Gastrocnemius medialis (tissue), 4 donors: ENCODE measurements at regions of chr1 and their contacts with region 1.

Region 1: GRCh38 chr1:168637350-168637991 is 61.1 kb downstream of the XCL1 start:
- DNase-seq: peak in 1 of 2 donors; percentile 30
- ATAC-seq: peak; percentile 60 to 79
- H3K4me3 ChIP-seq: peak overlapping the region in 1 of 4 donors; percentile 9
- H3K27ac ChIP-seq: peak overlapping the region; percentile 88 to 100 (median 94)
- H3K4me1 ChIP-seq: peaks cover 23 to 47% of the 10 kb centered on the region in 2 donors
- H3K27me3 ChIP-seq: no peaks in the 10 kb centered on the region
- CTCF ChIP-seq: peak; percentile 61 to 84 (median 77)
- POLR2A ChIP-seq: peak in 1 of 2 donors; percentile 12

Region 2: GRCh38 chr1:168483539-168483938 is 153.9 kb before region 1 on chr1:
- in situ Hi-C with region 1: no loop called
- intact Hi-C with region 1: no loop called
- DNase-seq: no peak
- ATAC-seq: peak; percentile 38 to 43
- H3K4me3 ChIP-seq: no peak overlapping the region
- H3K27ac ChIP-seq: peak overlapping the region in 1 of 4 donors; percentile 39
- H3K4me1 ChIP-seq: peaks cover 0 to 3% of the 10 kb centered on the region in 2 donors
- H3K27me3 ChIP-seq: no peaks in the 10 kb centered on the region
- CTCF ChIP-seq: no peak
- POLR2A ChIP-seq: no peak

Region 3: GRCh38 chr1:168623003-168623828 is 14.3 kb before region 1 on chr1:
- in situ Hi-C with region 1: no loop called
- intact Hi-C with region 1: loop called (anchors 1 kb)
- DNase-seq: peak; percentile 88 to 92
- ATAC-seq: peak; percentile 88 to 93
- H3K4me3 ChIP-seq: peak overlapping the region in 3 of 4 donors; percentile 15 to 31 (median 24)
- H3K27ac ChIP-seq: peak overlapping the region; percentile 85 to 100 (median 90)
- H3K4me1 ChIP-seq: peaks cover 29 to 37% of the 10 kb centered on the region in 2 donors
- H3K27me3 ChIP-seq: no peaks in the 10 kb centered on the region
- CTCF ChIP-seq: peak in 2 of 5 experiments; percentile 22 to 25
- POLR2A ChIP-seq: peak in 1 of 2 donors; percentile 81

Region 4: DNA sequence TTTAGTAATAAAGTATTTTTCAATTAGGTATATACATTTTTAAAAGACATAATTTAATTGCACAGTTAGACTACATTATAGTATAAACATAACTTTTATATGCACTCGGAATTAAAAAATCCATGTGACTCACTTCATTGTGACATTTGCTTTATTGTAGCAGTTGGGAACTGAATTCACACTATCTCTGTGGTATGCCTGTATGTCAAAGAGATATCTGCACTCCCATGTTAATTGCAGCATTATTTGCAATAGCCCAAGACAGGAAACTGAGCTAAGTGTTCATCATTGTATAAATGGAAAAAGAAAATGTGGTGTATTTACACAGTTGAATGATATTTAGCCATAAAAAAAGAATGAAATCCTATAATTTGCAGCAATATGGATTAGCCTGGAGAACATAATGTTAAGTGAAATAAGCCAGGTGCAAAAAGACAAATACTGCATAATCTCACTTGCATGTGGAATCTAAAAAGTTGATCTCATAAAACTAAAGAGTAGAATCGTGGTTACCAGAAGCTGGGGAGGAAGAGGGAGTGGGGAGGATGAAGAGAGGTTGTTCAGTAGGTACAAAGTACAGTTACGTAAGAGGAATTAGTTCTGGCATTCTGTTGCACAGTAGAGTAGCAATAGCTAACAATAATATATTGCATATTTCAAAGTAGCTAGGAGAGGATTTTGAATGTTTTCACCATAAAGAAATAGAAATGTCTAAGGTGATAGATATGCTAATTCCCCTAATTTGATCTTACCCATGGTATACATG is 26.8 kb after region 1 on chr1:
- in situ Hi-C with region 1: no loop called
- intact Hi-C with region 1: no loop called
- DNase-seq: no peak
- ATAC-seq: no peak
- H3K4me3 ChIP-seq: no peak overlapping the region
- H3K27ac ChIP-seq: no peak overlapping the region
- H3K4me1 ChIP-seq: peaks cover 0 to 10% of the 10 kb centered on the region in 2 donors
- H3K27me3 ChIP-seq: no peaks in the 10 kb centered on the region
- CTCF ChIP-seq: no peak
- POLR2A ChIP-seq: no peak

Region 5: DNA sequence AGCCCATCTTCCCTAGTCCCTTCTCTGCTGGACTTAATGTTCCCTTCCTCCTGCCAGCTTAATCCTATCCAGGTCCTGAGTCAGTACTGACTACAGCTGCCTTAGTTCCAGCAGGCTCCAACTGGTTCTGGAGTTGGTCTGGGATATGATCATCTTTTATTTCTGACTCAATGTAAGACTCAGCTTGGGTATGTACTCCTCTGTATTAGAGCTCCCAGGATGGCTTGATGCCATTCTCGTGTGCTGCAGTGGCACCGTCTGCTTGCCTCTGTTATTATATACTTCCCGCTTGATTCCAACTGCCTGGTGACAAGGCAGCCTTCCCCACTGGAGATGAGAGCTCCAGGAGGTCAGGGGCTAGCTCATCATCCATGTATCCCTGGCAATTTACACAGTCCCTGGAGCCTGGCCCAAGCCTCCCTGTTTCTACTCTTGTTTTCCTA is 255.9 kb after region 1 on chr1:
- in situ Hi-C with region 1: loop called in 2 of 4 experiments (anchors 10 kb)
- intact Hi-C with region 1: loop called (anchors 2 kb)
- DNase-seq: peak; percentile 74 to 88
- ATAC-seq: peak; percentile 98 to 99
- H3K4me3 ChIP-seq: peak overlapping the region in 2 of 4 donors; percentile 11 to 19
- H3K27ac ChIP-seq: peak overlapping the region; percentile 83 to 95 (median 88)
- H3K4me1 ChIP-seq: peaks cover 8 to 21% of the 10 kb centered on the region in 2 donors
- H3K27me3 ChIP-seq: no peaks in the 10 kb centered on the region
- CTCF ChIP-seq: no peak
- POLR2A ChIP-seq: peak; percentile 11 to 47

Region 6: GRCh38 chr1:169106095-169106920 is 468.8 kb after region 1 on chr1 and contains the start of gene ATP1B1:
- in situ Hi-C with region 1: loop called in 2 of 4 experiments (anchors 5 to 25 kb)
- intact Hi-C with region 1: loop called (anchors 1 kb)
- DNase-seq: peak; percentile 82 to 89
- ATAC-seq: peak; percentile 57 to 64
- H3K4me3 ChIP-seq: peak within 1 kb of the TSS; percentile 65 to 94 (median 77)
- H3K27ac ChIP-seq: peak within 1 kb of the TSS; percentile 93 to 99 (median 96)
- H3K4me1 ChIP-seq: peaks cover 18 to 25% of the 10 kb centered on the region in 2 donors
- H3K27me3 ChIP-seq: no peaks in the 10 kb centered on the region
- CTCF ChIP-seq: peak; percentile 52 to 94 (median 83)
- POLR2A ChIP-seq: peak; percentile 97 to 99
- total RNA-seq, gene ATP1B1: 111 to 377 (median 324) TPM